Mammary epithelial cell (primary cell): ENCODE measurements at regions of chr1 and their contacts with region 1.

Region 1: GRCh38 chr1:183267646-183268431 is 81.8 kb downstream of the LAMC2 start:
- DNase-seq: peak; percentile 98
- H3K4me3 ChIP-seq: no peak overlapping the region
- H3K27ac ChIP-seq: peak overlapping the region; percentile 69
- H3K4me1 ChIP-seq: peaks cover 57% of the 10 kb centered on the region
- H3K27me3 ChIP-seq: no peaks in the 10 kb centered on the region
- CTCF ChIP-seq: no peak

Region 2: DNA sequence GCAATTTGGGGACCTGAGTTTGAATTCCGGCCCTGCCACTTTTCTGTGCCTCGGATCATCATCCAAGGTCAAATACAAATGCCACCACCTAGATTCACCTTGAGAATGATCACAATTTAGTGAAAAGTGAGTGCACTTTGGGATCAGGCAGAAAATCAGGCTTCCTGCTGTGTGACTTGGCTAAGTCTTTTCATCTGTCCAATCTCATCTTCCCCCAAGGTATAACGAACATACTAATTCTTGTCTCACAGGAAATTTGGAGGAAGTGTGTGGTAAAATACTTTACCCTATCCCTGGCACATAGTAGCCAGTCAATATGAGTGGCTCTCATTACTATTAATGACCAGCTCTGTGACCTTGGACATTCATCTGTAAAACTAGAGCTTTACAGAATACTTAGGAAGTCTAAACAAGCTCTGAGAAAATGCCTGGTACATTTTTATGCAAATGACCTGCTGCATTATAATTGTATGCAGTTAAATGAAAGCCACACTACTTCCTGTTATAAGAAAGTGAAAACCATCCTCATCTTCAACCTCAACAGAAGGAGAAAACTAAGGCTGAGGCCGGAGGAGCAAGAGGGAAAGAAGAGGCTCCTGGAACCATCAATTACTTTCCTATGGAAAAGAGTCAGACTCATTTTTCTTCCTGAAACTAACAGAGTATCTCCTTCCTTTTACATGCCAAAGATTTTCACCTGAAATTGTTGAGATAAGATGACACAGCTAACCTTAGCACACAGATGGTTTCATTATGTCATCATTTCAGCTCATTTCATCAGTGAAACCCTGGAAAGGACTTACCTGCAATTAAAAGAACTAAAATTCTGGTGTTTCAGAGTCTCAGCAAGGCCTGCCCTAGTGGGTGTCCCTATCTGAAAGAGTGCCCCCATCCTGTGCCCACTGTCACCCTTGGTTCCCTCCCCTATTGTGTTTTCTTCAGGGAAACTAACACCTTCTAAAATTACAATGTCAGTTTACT is 550.8 kb before region 1 on chr1:
- CTCF ChIA-PET with region 1: no interaction called
- dilution Hi-C with region 1: no loop called
- in situ Hi-C with region 1: no loop called
- intact Hi-C with region 1: no loop called
- DNase-seq: no peak
- H3K4me3 ChIP-seq: no peak overlapping the region
- H3K27ac ChIP-seq: no peak overlapping the region
- H3K4me1 ChIP-seq: no peaks in the 10 kb centered on the region
- H3K27me3 ChIP-seq: no peaks in the 10 kb centered on the region
- CTCF ChIP-seq: no peak

Region 3: GRCh38 chr1:183251959-183252450 is 15.8 kb before region 1 on chr1:
- CTCF ChIA-PET with region 1: no interaction called
- dilution Hi-C with region 1: no loop called
- in situ Hi-C with region 1: no loop called
- intact Hi-C with region 1: loop called (anchors 1 kb)
- DNase-seq: peak; percentile 55
- H3K4me3 ChIP-seq: no peak overlapping the region
- H3K27ac ChIP-seq: no peak overlapping the region
- H3K4me1 ChIP-seq: peaks cover 17% of the 10 kb centered on the region
- H3K27me3 ChIP-seq: no peaks in the 10 kb centered on the region
- CTCF ChIP-seq: no peak